Activated CD4-positive, alpha-beta T cell treated with anti-CD3 and anti-CD28 coated beads for 36 hours (primary cell): ENCODE measurements at regions of chr10 and their contacts with region 1.

Region 1: DNA sequence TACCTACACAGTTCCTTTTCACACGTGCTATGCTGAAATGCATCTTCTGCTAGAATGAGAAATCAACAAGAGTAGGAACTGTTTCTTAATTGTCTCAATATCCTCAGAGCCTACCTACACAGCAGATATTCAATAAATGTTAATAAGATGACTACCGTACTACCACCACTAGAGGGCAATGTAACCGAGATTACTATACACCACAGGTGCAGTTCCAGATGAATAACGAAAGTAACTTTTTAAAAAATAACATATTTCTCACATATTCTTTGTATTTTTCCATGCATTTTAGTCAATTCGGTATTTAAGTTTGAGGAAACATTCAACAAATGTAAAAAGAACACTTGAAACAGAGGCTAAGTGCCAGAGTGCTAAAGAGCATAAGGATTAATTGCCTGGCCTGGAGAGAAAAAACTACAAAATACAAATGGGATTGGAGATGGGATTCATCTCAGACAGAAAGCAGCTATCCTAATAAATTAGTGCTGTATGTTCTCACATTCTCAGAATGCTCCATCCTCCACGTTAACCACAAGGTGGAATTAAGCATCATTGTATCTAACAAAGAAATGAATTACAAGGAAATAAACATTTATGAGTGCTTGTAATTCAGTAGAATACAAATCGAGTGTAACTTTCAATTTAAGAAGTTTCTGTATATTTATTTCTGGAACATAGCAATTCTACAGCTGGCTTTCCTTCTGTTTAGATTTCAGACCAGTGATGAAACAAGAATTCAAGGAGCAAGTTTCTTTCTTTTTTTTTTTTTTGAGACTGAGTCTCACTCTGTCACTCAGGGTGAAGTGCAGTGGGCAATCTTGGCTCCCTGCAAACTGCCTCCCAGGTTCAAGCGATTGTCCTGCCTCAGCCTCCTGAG is 20.3 kb upstream of the HECTD2 start:
- DNase-seq: no peak
- ATAC-seq: peak; percentile 81
- H3K4me3 Mint-ChIP-seq: no peak overlapping the region
- H3K27ac Mint-ChIP-seq: no peak overlapping the region
- H3K4me1 Mint-ChIP-seq: peaks cover 6% of the 10 kb centered on the region
- H3K27me3 Mint-ChIP-seq: peaks cover 18% of the 10 kb centered on the region

Region 2: DNA sequence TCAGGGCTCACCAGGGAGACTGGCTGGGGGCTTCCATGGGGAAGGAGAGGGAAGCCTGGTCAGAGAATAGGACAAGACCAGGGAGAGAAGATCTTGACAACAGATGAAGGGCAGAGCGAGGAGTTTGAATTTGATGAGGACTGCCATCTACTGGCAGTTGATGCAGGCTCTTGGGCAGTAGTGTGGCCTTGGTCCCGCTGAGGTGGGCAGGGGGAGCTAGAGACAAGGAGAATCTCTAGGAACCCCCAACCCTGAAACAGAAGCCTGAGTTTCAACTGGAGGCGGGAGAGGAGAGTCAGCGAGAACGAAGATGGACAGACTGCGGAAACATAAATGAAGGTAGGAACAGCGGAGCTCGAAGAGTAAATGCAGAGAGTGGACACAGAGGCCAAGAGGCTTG is 162.0 kb after region 1 on chr10:
- CTCF ChIA-PET with region 1: interaction called, 3 read pairs
- POLR2A ChIA-PET with region 1: no interaction called
- intact Hi-C with region 1: loop called (anchors 1 kb)
- DNase-seq: peak; percentile 36
- ATAC-seq: no peak
- H3K4me3 Mint-ChIP-seq: no peak overlapping the region
- H3K27ac Mint-ChIP-seq: no peak overlapping the region
- H3K4me1 Mint-ChIP-seq: no peaks in the 10 kb centered on the region
- H3K27me3 Mint-ChIP-seq: peaks cover 6% of the 10 kb centered on the region

Region 3: GRCh38 chr10:91694170-91694794 is 304.4 kb after region 1 on chr10:
- CTCF ChIA-PET with region 1: interaction called, 4 read pairs
- POLR2A ChIA-PET with region 1: no interaction called
- intact Hi-C with region 1: loop called (anchors 1 to 2 kb)
- DNase-seq: peak; percentile 31
- ATAC-seq: no peak
- H3K4me3 Mint-ChIP-seq: no peak overlapping the region
- H3K27ac Mint-ChIP-seq: no peak overlapping the region
- H3K4me1 Mint-ChIP-seq: peaks cover 4% of the 10 kb centered on the region
- H3K27me3 Mint-ChIP-seq: peaks cover 4% of the 10 kb centered on the region